IMR-90 (cell line): ENCODE measurements at regions of chr7 and their contacts with region 1.

Region 1: DNA sequence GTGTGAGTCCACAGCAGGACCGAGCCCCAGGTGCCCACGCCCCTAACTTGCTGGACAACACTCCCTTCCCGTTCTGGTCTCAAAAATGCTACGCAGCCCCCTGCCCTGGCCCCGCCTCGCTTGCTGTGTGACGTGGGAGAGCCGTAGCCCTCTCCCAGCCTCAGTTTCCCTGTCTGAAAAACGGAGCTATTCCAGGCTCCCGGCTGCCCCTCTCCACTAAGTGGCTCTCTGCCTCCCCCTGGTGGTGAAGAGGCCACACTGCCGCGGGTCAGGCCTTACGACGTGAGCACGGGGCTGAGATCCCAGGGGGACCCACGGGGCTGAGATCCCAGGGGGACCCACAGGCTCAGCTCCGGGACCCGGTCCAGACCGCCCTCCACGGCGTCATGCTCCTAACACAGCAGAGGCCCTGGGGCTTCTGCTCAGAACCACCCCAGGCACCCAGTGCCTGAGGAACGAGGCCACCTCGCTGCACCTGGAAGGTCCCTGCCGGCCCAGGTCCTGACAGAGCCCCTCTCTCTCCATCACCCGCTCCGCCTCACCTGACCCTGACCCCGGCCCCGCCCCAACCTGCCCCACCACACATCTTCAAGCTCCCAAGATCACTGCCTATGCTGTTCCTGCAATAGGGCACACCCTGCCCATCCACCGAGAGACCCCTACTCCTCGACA is 26.7 kb downstream of the MICALL2 start:
- DNase-seq: peak; percentile 27
- ATAC-seq: peak; percentile 89
- H3K4me3 ChIP-seq: no peak overlapping the region
- H3K27ac ChIP-seq: no peak overlapping the region
- H3K4me1 ChIP-seq: no peaks in the 10 kb centered on the region
- H3K27me3 ChIP-seq: no peaks in the 10 kb centered on the region
- CTCF ChIP-seq: peak; percentile 87
- POLR2A ChIP-seq: no peak
- RAD21 ChIP-seq: peak; percentile 73

Region 2: DNA sequence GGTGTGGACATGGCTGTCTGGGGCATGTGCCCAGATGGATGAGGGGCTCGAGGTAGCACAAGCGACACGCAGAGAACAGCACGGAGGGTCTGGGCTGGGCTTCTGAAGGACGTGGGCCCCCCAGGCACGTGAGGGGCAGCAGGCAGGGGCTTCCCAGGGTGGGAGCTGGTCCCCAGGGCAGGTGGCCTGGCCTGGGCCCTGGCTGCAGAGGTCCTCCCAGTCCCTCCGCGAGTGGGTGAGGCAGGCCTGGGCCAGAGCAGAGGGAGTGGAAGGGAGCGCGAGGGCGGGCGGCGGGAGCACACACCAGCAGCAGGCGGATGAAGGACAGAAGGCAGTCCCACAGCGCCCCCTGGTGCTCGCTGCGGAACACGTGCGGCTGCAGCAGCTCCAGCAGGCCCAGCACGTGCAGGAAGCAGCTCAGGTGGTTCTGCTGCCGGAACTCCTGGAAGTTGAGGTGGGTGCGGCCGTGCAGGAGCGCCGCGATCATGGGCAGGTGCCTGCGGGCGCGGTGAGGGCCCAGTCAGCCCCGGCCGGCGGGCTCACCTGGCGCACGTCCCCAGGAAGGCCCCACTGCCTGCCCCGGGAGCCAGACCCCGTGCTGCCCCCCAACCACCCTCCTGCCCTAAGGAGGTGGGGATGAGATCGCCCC is 41.4 kb after region 1 on chr7:
- CTCF ChIA-PET with region 1: no interaction called
- POLR2A ChIA-PET with region 1: no interaction called
- dilution Hi-C with region 1: no loop called
- in situ Hi-C with region 1: no loop called
- intact Hi-C with region 1: loop called (anchors 2 kb)
- DNase-seq: peak; percentile 79
- ATAC-seq: peak; percentile 94
- H3K4me3 ChIP-seq: no peak overlapping the region
- H3K27ac ChIP-seq: no peak overlapping the region
- H3K4me1 ChIP-seq: no peaks in the 10 kb centered on the region
- H3K27me3 ChIP-seq: no peaks in the 10 kb centered on the region
- CTCF ChIP-seq: peak; percentile 90
- POLR2A ChIP-seq: no peak
- RAD21 ChIP-seq: peak; percentile 86